ENCODE measurements at regions of chr2 and their contacts with region 1.

Region 1: GRCh38 chr2:112685271-112685884 is 35.4 kb upstream of the NT5DC4 start:
- DNase-seq: no peak
- ATAC-seq: no peak
- H3K4me3 Mint-ChIP-seq: no peak overlapping the region
- H3K27ac Mint-ChIP-seq: no peak overlapping the region
- H3K4me1 Mint-ChIP-seq: peaks cover 14% of the 10 kb centered on the region
- H3K27me3 Mint-ChIP-seq: no peaks in the 10 kb centered on the region
- CTCF ChIP-seq: no peak

Region 2: GRCh38 chr2:112636231-112636960 is 49.0 kb before region 1 on chr2:
- CTCF ChIA-PET with region 1: interaction called, 3 read pairs
- POLR2A ChIA-PET with region 1: interaction called, 12 read pairs
- intact Hi-C with region 1: no loop called
- DNase-seq: no peak
- ATAC-seq: peak; percentile 93
- H3K4me3 Mint-ChIP-seq: no peak overlapping the region
- H3K27ac Mint-ChIP-seq: peak overlapping the region; percentile 51
- H3K4me1 Mint-ChIP-seq: peaks cover 22% of the 10 kb centered on the region
- H3K27me3 Mint-ChIP-seq: no peaks in the 10 kb centered on the region
- CTCF ChIP-seq: no peak

Measured in activated B cell treated with CpG ODN at 0.5 μM for 24 hours (primary cell).